AG04450 (cell line): ENCODE measurements at regions of chr2 and their contacts with region 1.

Region 1: GRCh38 chr2:203814661-203815540 is 52.7 kb upstream of the CTLA4 start:
- DNase-seq: peak; percentile 42
- H3K4me3 ChIP-seq: no peak overlapping the region
- H3K27ac ChIP-seq: no peak overlapping the region
- H3K27me3 ChIP-seq: peaks cover 5% of the 10 kb centered on the region
- CTCF ChIP-seq: peak; percentile 85

Region 2: GRCh38 chr2:203225423-203226039 is 589.4 kb before region 1 on chr2:
- CTCF ChIA-PET with region 1: interaction called, 13 read pairs
- POLR2A ChIA-PET with region 1: no interaction called
- DNase-seq: no peak
- H3K4me3 ChIP-seq: no peak overlapping the region
- H3K27ac ChIP-seq: no peak overlapping the region
- H3K27me3 ChIP-seq: no peaks in the 10 kb centered on the region
- CTCF ChIP-seq: peak; percentile 67

Region 3: DNA sequence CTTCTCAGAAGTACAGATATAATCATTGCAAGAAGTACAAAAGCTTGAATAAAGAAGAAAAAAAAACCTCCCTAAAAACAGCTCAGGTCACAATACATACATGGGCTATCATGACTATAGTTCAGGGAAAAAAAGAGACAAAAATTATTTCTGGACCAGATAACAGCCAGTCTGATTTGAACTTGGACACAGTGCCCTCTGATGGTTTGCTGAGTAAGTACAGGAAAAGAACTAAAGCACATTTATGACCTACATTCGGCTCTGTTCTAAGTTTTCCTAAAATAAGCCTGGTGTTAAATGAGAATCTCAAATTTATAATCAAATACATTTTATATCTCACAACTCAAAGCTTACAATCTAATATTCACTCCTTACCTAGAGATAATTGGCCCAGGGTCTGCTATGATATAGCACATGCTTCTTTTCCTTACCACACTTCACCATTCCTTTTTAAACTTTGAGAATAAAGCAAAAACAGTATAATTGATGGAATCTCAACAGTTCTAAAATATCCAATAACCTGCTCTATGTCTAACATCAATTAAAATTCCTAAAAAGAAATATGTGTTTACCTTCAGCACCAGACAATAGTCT is 360.9 kb before region 1 on chr2:
- CTCF ChIA-PET with region 1: interaction called, 32 read pairs
- POLR2A ChIA-PET with region 1: no interaction called
- DNase-seq: peak; percentile 24
- H3K4me3 ChIP-seq: no peak overlapping the region
- H3K27ac ChIP-seq: no peak overlapping the region
- H3K27me3 ChIP-seq: no peaks in the 10 kb centered on the region
- CTCF ChIP-seq: peak; percentile 79

Region 4: DNA sequence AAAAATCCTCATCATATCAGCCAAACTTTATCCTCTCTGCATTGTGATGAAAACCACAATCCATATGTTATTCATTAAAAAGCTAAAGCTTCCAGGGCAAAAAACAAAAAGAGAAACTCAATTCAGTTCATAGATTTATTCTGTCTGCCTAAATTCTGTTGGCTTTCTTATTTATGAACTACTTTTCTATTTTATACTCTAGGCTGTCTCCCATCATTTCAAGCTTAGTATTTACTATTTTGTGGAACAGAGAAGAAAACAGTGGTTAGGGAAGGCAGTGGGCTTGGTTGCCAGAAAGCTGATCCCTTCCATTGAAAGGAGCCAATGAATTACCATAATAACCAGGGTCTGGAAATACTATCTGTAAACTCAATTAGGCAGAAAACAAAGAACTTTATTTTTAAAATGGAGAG is 351.6 kb before region 1 on chr2:
- CTCF ChIA-PET with region 1: interaction called, 25 read pairs
- POLR2A ChIA-PET with region 1: no interaction called
- DNase-seq: no peak
- H3K4me3 ChIP-seq: no peak overlapping the region
- H3K27ac ChIP-seq: peak overlapping the region; percentile 33
- H3K27me3 ChIP-seq: no peaks in the 10 kb centered on the region
- CTCF ChIP-seq: no peak

Region 5: GRCh38 chr2:203484266-203485112 is 330.4 kb before region 1 on chr2:
- CTCF ChIA-PET with region 1: interaction called, 18 read pairs
- POLR2A ChIA-PET with region 1: no interaction called
- DNase-seq: no peak
- H3K4me3 ChIP-seq: no peak overlapping the region
- H3K27ac ChIP-seq: no peak overlapping the region
- H3K27me3 ChIP-seq: no peaks in the 10 kb centered on the region
- CTCF ChIP-seq: peak; percentile 59

Region 6: GRCh38 chr2:203534621-203535077 is 280.3 kb before region 1 on chr2:
- CTCF ChIA-PET with region 1: interaction called, 13 read pairs
- POLR2A ChIA-PET with region 1: interaction called, 3 read pairs
- DNase-seq: no peak
- H3K4me3 ChIP-seq: peak overlapping the region; percentile 86
- H3K27ac ChIP-seq: peak overlapping the region; percentile 80
- H3K27me3 ChIP-seq: no peaks in the 10 kb centered on the region
- CTCF ChIP-seq: no peak

Region 7: GRCh38 chr2:203909261-203909967 is 94.5 kb after region 1 on chr2:
- CTCF ChIA-PET with region 1: interaction called, 17 read pairs
- POLR2A ChIA-PET with region 1: no interaction called
- DNase-seq: peak; percentile 65
- H3K4me3 ChIP-seq: peak overlapping the region; percentile 48
- H3K27ac ChIP-seq: peak overlapping the region; percentile 60
- H3K27me3 ChIP-seq: no peaks in the 10 kb centered on the region
- CTCF ChIP-seq: peak; percentile 84